Common myeloid progenitor, CD34-positive (primary cell): ENCODE measurements at regions of chr2 and their contacts with region 1.

Region 1: GRCh38 chr2:44342854-44343253 is 18.4 kb downstream of the PREPL start:
- DNase-seq: peak; percentile 45 to 73 (median 71)
- H3K4me3 ChIP-seq: no peak overlapping the region
- H3K27ac ChIP-seq: no peak overlapping the region
- H3K4me1 ChIP-seq: no peaks in the 10 kb centered on the region
- H3K27me3 ChIP-seq: no peaks in the 10 kb centered on the region

Region 2: GRCh38 chr2:44044281-44044720 is 298.6 kb before region 1 on chr2:
- CTCF ChIA-PET with region 1: interaction called, 23 read pairs
- POLR2A ChIA-PET with region 1: no interaction called
- DNase-seq: peak; percentile 81 to 88 (median 87)
- H3K4me3 ChIP-seq: no peak overlapping the region
- H3K27ac ChIP-seq: no peak overlapping the region
- H3K4me1 ChIP-seq: peaks cover 0 to 6% (median 0%) of the 10 kb centered on the region in 4 experiments
- H3K27me3 ChIP-seq: no peaks in the 10 kb centered on the region

Region 3: DNA sequence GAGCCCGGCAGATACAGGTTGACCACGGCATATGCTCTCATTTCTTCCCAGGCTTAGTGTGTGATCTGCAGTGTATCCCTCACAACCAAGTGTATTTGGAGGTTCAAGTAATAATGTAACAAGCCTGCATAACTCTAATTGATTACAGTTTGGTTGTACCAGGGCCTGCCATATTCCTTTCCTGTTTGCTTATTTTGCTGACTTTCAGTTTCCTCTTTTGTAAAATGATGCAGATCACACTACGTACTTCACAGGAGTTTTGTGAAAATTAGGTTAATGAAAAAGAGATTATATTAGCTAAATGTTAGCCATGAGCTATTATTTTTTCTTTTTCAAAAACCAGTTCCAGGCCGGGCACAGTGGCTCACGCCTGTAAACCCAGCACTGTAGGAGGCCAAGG is 41.7 kb before region 1 on chr2:
- CTCF ChIA-PET with region 1: no interaction called
- POLR2A ChIA-PET with region 1: no interaction called
- DNase-seq: no peak
- H3K4me3 ChIP-seq: no peak overlapping the region
- H3K27ac ChIP-seq: no peak overlapping the region
- H3K4me1 ChIP-seq: no peaks in the 10 kb centered on the region
- H3K27me3 ChIP-seq: no peaks in the 10 kb centered on the region